GM12878 (cell line): ENCODE measurements at regions of chr2 and their contacts with region 1.

Region 1: GRCh38 chr2:30336978-30337841 is 105.9 kb downstream of the LBH start:
- DNase-seq: peak; percentile 92
- ATAC-seq: peak; percentile 90
- H3K4me3 ChIP-seq: peak overlapping the region; percentile 66
- H3K27ac ChIP-seq: peak overlapping the region; percentile 98
- H3K4me1 ChIP-seq: peaks cover 72% of the 10 kb centered on the region
- H3K27me3 ChIP-seq: no peaks in the 10 kb centered on the region
- CTCF ChIP-seq: no peak
- EP300 ChIP-seq: peak; percentile 31 to 51; a peak in 2 of 4 replicates
- POLR2A ChIP-seq: peak; percentile 56
- RAD21 ChIP-seq: 0 out of 2 replicates have a peak, but pooled peaks have one; percentile 18

Region 2: DNA sequence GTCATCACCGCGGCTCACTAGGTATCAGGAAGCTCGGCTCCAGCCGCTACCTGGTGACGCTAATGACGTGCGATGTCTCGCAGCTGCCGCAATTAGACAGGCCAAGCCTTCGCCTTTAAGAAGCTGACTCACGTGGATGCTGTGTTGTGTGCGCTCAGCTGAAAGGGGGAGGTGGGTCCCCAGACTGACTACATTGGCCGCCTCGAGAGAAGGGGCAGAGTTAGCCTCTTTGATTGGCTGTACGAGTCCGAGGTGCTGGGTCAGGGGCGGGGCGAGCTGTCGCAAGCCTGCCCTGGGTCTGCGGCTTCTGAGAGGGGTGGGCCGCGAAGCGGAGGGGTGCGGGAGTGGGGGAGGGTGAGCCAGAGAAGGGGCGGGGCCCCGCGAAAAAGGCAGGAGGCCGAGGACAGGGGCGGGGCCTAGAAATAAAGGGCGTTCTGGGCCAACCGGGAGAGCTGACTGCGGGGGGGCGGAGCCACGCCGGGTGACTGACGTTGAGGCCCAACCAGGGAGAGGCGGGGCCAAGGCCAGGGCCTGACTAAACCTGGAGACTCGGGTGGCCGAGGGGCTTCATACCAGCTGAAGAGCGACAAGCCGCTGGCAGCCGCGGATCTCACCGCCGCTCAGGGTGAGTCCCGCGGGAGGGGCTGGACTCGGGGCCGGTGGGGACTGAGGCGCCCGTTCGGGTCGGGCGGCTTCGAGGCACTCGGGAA is 190.6 kb before region 1 on chr2 and contains the start of gene YPEL5:
- CTCF ChIA-PET with region 1: interaction called, 4 read pairs
- POLR2A ChIA-PET with region 1: interaction called, 3 read pairs
- RAD21 ChIA-PET with region 1: interaction called, 3 read pairs
- SMC1A ChIA-PET with region 1: interaction called, 5 read pairs
- in situ Hi-C with region 1: no loop called
- intact Hi-C with region 1: loop called (anchors 5 kb)
- DNase-seq: peak; percentile 97
- ATAC-seq: peak; percentile 96
- H3K4me3 ChIP-seq: peak within 1 kb of the TSS; percentile 78
- H3K27ac ChIP-seq: peak within 1 kb of the TSS; percentile 83
- H3K4me1 ChIP-seq: peaks cover 25% of the 10 kb centered on the region
- H3K27me3 ChIP-seq: no peaks in the 10 kb centered on the region
- CTCF ChIP-seq: no peak
- EP300 ChIP-seq: peak in 1 of 2 experiments; percentile 78; a peak in 1 of 4 replicates
- POLR2A ChIP-seq: peak; percentile 82
- RAD21 ChIP-seq: no peak
- polyA plus RNA-seq, gene YPEL5: 24.9 to 43.6 TPM

Region 3: DNA sequence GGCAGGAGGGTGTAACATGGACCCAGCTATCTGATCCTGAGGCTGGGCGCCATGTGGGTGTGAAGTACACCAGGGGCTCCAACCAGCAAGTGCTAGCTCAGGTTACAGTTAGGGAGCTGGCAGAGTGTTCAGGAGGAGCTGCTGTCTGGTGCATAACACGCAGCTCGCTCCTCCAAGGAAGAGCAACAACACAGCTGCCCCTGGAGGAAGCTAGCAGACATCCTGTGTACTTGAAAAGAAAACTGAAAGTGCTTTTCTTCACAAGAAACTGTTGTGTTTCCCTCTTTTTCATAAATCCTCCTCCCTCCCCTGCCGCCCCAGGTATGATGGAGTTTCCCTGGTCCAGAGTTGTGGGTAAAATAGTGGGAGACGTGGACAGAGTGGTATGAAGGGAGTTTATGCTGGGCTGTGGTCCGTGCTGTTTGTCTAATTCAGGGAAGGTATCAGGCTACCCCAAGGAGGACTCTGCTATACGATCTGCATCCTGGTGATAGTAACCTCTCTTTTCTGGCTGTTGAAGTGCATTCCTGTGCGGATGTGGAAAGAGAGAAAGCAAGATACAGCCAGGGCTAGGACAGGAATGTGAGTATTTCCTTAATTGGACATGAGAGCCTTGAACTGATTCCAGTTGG is 112.0 kb before region 1 on chr2:
- CTCF ChIA-PET with region 1: interaction called, 103 read pairs
- POLR2A ChIA-PET with region 1: interaction called, 65 read pairs
- RAD21 ChIA-PET with region 1: interaction called, 148 read pairs
- SMC1A ChIA-PET with region 1: interaction called, 282 read pairs
- in situ Hi-C with region 1: no loop called
- intact Hi-C with region 1: loop called (anchors 2 kb)
- DNase-seq: no peak
- ATAC-seq: peak; percentile 72
- H3K4me3 ChIP-seq: peak overlapping the region; percentile 56
- H3K27ac ChIP-seq: peak overlapping the region; percentile 95
- H3K4me1 ChIP-seq: peaks cover 45% of the 10 kb centered on the region
- H3K27me3 ChIP-seq: no peaks in the 10 kb centered on the region
- CTCF ChIP-seq: 0 out of 6 replicates have a peak, but pooled peaks of 1 of the 3 experiments have one; percentile 7
- EP300 ChIP-seq: no peak
- POLR2A ChIP-seq: peak; percentile 60
- RAD21 ChIP-seq: no peak

Region 4: GRCh38 chr2:30273261-30273861 is 63.8 kb before region 1 on chr2:
- CTCF ChIA-PET with region 1: interaction called, 11 read pairs
- POLR2A ChIA-PET with region 1: interaction called, 4 read pairs
- RAD21 ChIA-PET with region 1: interaction called, 6 read pairs
- SMC1A ChIA-PET with region 1: interaction called, 24 read pairs
- in situ Hi-C with region 1: no loop called
- intact Hi-C with region 1: no loop called
- DNase-seq: no peak
- ATAC-seq: no peak
- H3K4me3 ChIP-seq: no peak overlapping the region
- H3K27ac ChIP-seq: no peak overlapping the region
- H3K4me1 ChIP-seq: no peaks in the 10 kb centered on the region; the same call in 1 of the 2 replicates
- H3K27me3 ChIP-seq: no peaks in the 10 kb centered on the region
- CTCF ChIP-seq: no peak
- EP300 ChIP-seq: no peak
- POLR2A ChIP-seq: no peak
- RAD21 ChIP-seq: no peak

Region 5: GRCh38 chr2:30310955-30311354 is 26.3 kb before region 1 on chr2:
- CTCF ChIA-PET with region 1: interaction called, 3 read pairs
- POLR2A ChIA-PET with region 1: no interaction called
- RAD21 ChIA-PET with region 1: interaction called, 18 read pairs
- SMC1A ChIA-PET with region 1: interaction called, 9 read pairs
- in situ Hi-C with region 1: no loop called
- intact Hi-C with region 1: no loop called
- DNase-seq: no peak
- ATAC-seq: peak; percentile 62
- H3K4me3 ChIP-seq: no peak overlapping the region
- H3K27ac ChIP-seq: 0 out of 2 replicates have a peak overlapping the region, but pooled peaks have one; percentile 13
- H3K4me1 ChIP-seq: peaks cover 20% of the 10 kb centered on the region
- H3K27me3 ChIP-seq: no peaks in the 10 kb centered on the region
- CTCF ChIP-seq: no peak
- EP300 ChIP-seq: no peak
- POLR2A ChIP-seq: no peak
- RAD21 ChIP-seq: no peak

Region 6: DNA sequence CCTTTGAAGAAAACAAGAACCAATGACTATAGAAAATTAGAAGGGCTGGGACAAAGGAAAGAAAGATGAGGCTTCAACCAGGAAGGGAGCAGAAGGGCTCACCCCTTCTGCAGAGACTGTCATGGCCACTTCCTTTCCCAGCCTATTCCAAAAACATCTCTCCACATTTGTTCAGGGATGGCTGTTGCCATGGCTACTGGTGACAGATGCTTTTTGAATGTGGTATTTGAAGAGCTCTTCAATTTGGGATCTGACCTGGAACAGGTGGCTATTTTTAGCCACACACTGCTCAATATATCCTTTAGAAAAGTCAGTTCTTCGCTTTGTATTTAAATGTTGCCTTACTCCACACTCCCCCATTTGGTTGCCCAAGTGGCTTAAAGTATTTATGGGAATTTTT is 45.8 kb after region 1 on chr2:
- CTCF ChIA-PET with region 1: no interaction called
- POLR2A ChIA-PET with region 1: no interaction called
- RAD21 ChIA-PET with region 1: no interaction called
- SMC1A ChIA-PET with region 1: no interaction called
- in situ Hi-C with region 1: no loop called
- intact Hi-C with region 1: no loop called
- DNase-seq: no peak
- ATAC-seq: no peak
- H3K4me3 ChIP-seq: no peak overlapping the region
- H3K27ac ChIP-seq: no peak overlapping the region
- H3K4me1 ChIP-seq: no peaks in the 10 kb centered on the region
- H3K27me3 ChIP-seq: peaks cover 0 to 3% of the 10 kb centered on the region in 2 experiments; a peak in 1 of 4 replicates
- CTCF ChIP-seq: no peak
- EP300 ChIP-seq: no peak
- POLR2A ChIP-seq: no peak
- RAD21 ChIP-seq: no peak

Region 7: GRCh38 chr2:30421604-30422443 is 84.6 kb after region 1 on chr2:
- CTCF ChIA-PET with region 1: interaction called, 17 read pairs
- POLR2A ChIA-PET with region 1: interaction called, 20 read pairs
- RAD21 ChIA-PET with region 1: interaction called, 12 read pairs
- SMC1A ChIA-PET with region 1: interaction called, 19 read pairs
- in situ Hi-C with region 1: no loop called
- intact Hi-C with region 1: loop called (anchors 5 kb)
- DNase-seq: peak; percentile 28
- ATAC-seq: peak; percentile 77
- H3K4me3 ChIP-seq: 0 out of 2 replicates have a peak overlapping the region, but pooled peaks have one; percentile 17
- H3K27ac ChIP-seq: peak overlapping the region; percentile 6; the same call in 1 of the 2 replicates
- H3K4me1 ChIP-seq: peaks cover 25% of the 10 kb centered on the region
- H3K27me3 ChIP-seq: no peaks in the 10 kb centered on the region
- CTCF ChIP-seq: no peak
- EP300 ChIP-seq: no peak
- POLR2A ChIP-seq: no peak
- RAD21 ChIP-seq: no peak

Region 8: DNA sequence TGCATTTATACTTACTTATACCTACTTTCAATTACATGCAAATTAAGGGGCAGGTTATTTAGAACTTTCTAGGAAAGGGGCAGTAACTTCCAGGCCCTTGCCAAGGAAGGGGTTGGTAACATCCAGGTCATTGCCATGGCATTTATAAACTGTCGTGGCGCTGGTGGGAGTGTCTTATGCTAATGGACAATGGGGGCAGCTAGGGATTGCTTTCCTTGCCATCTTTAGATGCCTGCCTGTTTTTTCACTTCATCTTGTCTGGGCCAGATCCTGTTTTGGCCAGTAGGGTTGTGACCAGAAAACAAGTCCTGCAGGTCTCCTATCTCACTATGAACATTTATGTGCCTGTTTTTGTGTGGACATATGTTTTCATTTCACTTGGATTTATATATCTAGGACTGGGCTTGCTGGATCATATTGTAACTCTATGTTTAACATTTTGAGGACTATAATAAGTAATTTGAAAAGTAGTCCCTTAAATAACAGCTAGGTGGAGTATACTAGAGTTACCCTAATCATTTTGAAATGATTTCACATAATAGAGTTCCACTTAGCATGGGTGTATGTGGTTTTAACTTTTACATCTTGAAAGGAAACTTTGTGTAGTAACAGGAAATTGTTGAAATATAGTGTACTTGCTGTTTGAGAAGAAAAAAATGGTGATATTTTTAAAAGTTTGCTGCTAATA is 165.9 kb after region 1 on chr2:
- CTCF ChIA-PET with region 1: interaction called, 3 read pairs
- POLR2A ChIA-PET with region 1: no interaction called
- RAD21 ChIA-PET with region 1: interaction called, 3 read pairs
- SMC1A ChIA-PET with region 1: interaction called, 22 read pairs
- in situ Hi-C with region 1: no loop called
- intact Hi-C with region 1: no loop called
- DNase-seq: no peak
- ATAC-seq: peak; percentile 66
- H3K4me3 ChIP-seq: no peak overlapping the region
- H3K27ac ChIP-seq: no peak overlapping the region
- H3K4me1 ChIP-seq: peaks cover 5% of the 10 kb centered on the region
- H3K27me3 ChIP-seq: no peaks in the 10 kb centered on the region
- CTCF ChIP-seq: no peak
- EP300 ChIP-seq: no peak
- POLR2A ChIP-seq: no peak
- RAD21 ChIP-seq: no peak; the same call in 1 of the 2 replicates